Activated CD4-positive, alpha-beta memory T cell treated with anti-CD3 and anti-CD28 coated beads for 36 hours (primary cell): ENCODE measurements at regions of chr16 and their contacts with region 1.

Region 1: DNA sequence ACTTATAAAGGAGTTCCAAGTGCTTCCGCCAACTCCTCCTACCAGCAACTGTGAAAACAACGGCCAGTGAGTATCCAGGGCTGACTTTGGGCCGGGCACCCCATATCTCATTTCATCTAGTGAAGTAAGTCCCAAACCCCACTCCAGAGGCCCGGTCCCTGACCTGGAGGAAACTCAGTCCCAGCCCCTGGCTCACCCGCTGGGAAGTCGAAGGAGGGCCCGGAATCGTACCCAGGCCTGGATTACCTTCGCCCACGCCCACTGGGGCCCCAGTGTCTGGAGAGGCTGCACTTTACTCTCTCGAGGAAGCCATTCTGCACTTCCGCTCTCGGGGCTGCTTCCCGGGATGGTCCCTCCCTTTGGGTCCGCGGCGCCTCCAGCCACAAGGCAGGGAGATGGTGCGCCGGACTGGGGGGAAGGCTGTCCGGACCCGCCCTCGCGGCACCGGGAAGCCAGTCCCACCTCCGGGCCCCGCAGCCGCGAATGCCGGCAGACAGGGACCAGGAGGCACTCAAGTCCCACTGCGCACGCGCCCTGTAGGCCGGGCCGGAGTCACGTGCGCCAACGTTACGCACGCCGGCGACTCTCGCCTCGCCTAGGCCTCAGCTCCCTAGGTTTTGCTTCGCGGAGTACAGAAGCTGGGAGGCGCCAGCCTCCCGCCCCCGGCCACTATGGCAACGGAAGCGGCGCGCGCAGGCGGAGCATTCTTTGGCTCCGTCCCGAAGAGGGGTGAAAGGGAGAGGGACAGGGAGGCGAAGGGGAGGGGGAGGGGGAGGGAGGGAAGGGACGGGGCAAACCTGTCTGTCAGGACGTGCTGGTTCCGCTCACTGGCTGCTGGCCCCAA is at the start of gene CMTR2:
- DNase-seq: peak; percentile 95
- H3K4me3 Mint-ChIP-seq: peak within 1 kb of the TSS; percentile 83
- H3K27ac Mint-ChIP-seq: peak within 1 kb of the TSS; percentile 88
- H3K4me1 Mint-ChIP-seq: peaks cover 13% of the 10 kb centered on the region
- H3K27me3 Mint-ChIP-seq: peaks cover 13% of the 10 kb centered on the region
- total RNA-seq, gene CMTR2: 18.1 to 19.8 TPM

Region 2: GRCh38 chr16:70800781-70801530 is 488.2 kb before region 1 on chr16 and contains the start of gene VAC14:
- CTCF ChIA-PET with region 1: no interaction called
- POLR2A ChIA-PET with region 1: no interaction called
- intact Hi-C with region 1: loop called (anchors 2 kb)
- DNase-seq: peak; percentile 98
- H3K4me3 Mint-ChIP-seq: peak within 1 kb of the TSS; percentile 87
- H3K27ac Mint-ChIP-seq: peak within 1 kb of the TSS; percentile 60
- H3K4me1 Mint-ChIP-seq: peaks cover 30% of the 10 kb centered on the region
- H3K27me3 Mint-ChIP-seq: no peaks in the 10 kb centered on the region
- total RNA-seq, gene VAC14: 22.2 to 25.0 TPM

Region 3: GRCh38 chr16:71484006-71484893 is 195.1 kb after region 1 on chr16:
- CTCF ChIA-PET with region 1: no interaction called
- POLR2A ChIA-PET with region 1: no interaction called
- intact Hi-C with region 1: loop called (anchors 2 kb)
- DNase-seq: peak; percentile 89
- H3K4me3 Mint-ChIP-seq: peak overlapping the region; percentile 81
- H3K27ac Mint-ChIP-seq: peak overlapping the region; percentile 74
- H3K4me1 Mint-ChIP-seq: peaks cover 13% of the 10 kb centered on the region
- H3K27me3 Mint-ChIP-seq: no peaks in the 10 kb centered on the region

Region 4: GRCh38 chr16:71894921-71895678 is 606.0 kb after region 1 on chr16 and contains the start of gene IST1:
- CTCF ChIA-PET with region 1: no interaction called
- POLR2A ChIA-PET with region 1: no interaction called
- intact Hi-C with region 1: loop called (anchors 5 kb)
- DNase-seq: peak; percentile 99
- H3K4me3 Mint-ChIP-seq: peak within 1 kb of the TSS; percentile 95
- H3K27ac Mint-ChIP-seq: peak within 1 kb of the TSS; percentile 97
- H3K4me1 Mint-ChIP-seq: peaks cover 27% of the 10 kb centered on the region
- H3K27me3 Mint-ChIP-seq: no peaks in the 10 kb centered on the region
- total RNA-seq, gene IST1: 191 to 192 TPM

Region 5: GRCh38 chr16:73000020-73000906 is 1711.2 kb after region 1 on chr16:
- CTCF ChIA-PET with region 1: no interaction called
- POLR2A ChIA-PET with region 1: no interaction called
- intact Hi-C with region 1: no loop called
- DNase-seq: no peak
- H3K4me3 Mint-ChIP-seq: no peak overlapping the region
- H3K27ac Mint-ChIP-seq: no peak overlapping the region
- H3K4me1 Mint-ChIP-seq: no peaks in the 10 kb centered on the region
- H3K27me3 Mint-ChIP-seq: no peaks in the 10 kb centered on the region